Prostate gland (tissue), 2 donors: ENCODE measurements at regions of chr17 and their contacts with region 1.

Region 1: GRCh38 chr17:80675438-80676095 is 130.9 kb downstream of the RPTOR start:
- DNase-seq: no peak
- H3K4me3 ChIP-seq: no peak overlapping the region
- H3K27ac ChIP-seq: no peak overlapping the region
- H3K4me1 ChIP-seq: no peaks in the 10 kb centered on the region
- H3K27me3 ChIP-seq: no peaks in the 10 kb centered on the region
- CTCF ChIP-seq: no peak
- POLR2A ChIP-seq: no peak

Region 2: GRCh38 chr17:80789356-80789902 is 113.9 kb after region 1 on chr17:
- intact Hi-C with region 1: loop called (anchors 5 kb)
- DNase-seq: no peak
- H3K4me3 ChIP-seq: no peak overlapping the region
- H3K27ac ChIP-seq: no peak overlapping the region
- H3K4me1 ChIP-seq: no peaks in the 10 kb centered on the region
- H3K27me3 ChIP-seq: no peaks in the 10 kb centered on the region
- CTCF ChIP-seq: no peak
- POLR2A ChIP-seq: no peak